ENCODE measurements at regions of chr5 and their contacts with region 1.

Region 1: GRCh38 chr5:91311697-91312501 is 71.2 kb downstream of the ARRDC3 start:
- DNase-seq: peak; percentile 88
- H3K4me3 ChIP-seq: no peak overlapping the region
- H3K27ac ChIP-seq: peak overlapping the region; percentile 75 to 84 (median 80)
- H3K4me1 ChIP-seq: peaks cover 0 to 48% (median 41%) of the 10 kb centered on the region in 4 donors
- H3K27me3 ChIP-seq: no peaks in the 10 kb centered on the region
- CTCF ChIP-seq: no peak
- EP300 ChIP-seq: peak in 3 of 4 donors; percentile 21 to 64 (median 51)
- POLR2A ChIP-seq: no peak

Region 2: GRCh38 chr5:90932052-90932699 is 379.7 kb before region 1 on chr5:
- intact Hi-C with region 1: loop called (anchors 5 kb)
- DNase-seq: peak; percentile 75
- H3K4me3 ChIP-seq: no peak overlapping the region
- H3K27ac ChIP-seq: no peak overlapping the region
- H3K4me1 ChIP-seq: peaks cover 0 to 17% (median 11%) of the 10 kb centered on the region in 4 donors
- H3K27me3 ChIP-seq: no peaks in the 10 kb centered on the region
- CTCF ChIP-seq: peak; percentile 71 to 78 (median 76)
- EP300 ChIP-seq: no peak
- POLR2A ChIP-seq: no peak

Region 3: GRCh38 chr5:91038180-91038808 is 273.6 kb before region 1 on chr5:
- intact Hi-C with region 1: loop called (anchors 2 kb)
- DNase-seq: peak; percentile 83
- H3K4me3 ChIP-seq: no peak overlapping the region
- H3K27ac ChIP-seq: peak overlapping the region in 3 of 4 donors; percentile 45 to 56 (median 55)
- H3K4me1 ChIP-seq: peaks cover 0 to 41% (median 36%) of the 10 kb centered on the region in 4 donors
- H3K27me3 ChIP-seq: no peaks in the 10 kb centered on the region
- CTCF ChIP-seq: no peak
- EP300 ChIP-seq: peak; percentile 29 to 83 (median 60)
- POLR2A ChIP-seq: no peak

Region 4: GRCh38 chr5:91706785-91707520 is 395.1 kb after region 1 on chr5:
- intact Hi-C with region 1: no loop called
- DNase-seq: no peak
- H3K4me3 ChIP-seq: no peak overlapping the region
- H3K27ac ChIP-seq: no peak overlapping the region
- H3K4me1 ChIP-seq: no peaks in the 10 kb centered on the region
- H3K27me3 ChIP-seq: no peaks in the 10 kb centered on the region
- CTCF ChIP-seq: no peak
- EP300 ChIP-seq: no peak
- POLR2A ChIP-seq: no peak

Measured in sigmoid colon (tissue), 7 donors.